ENCODE measurements at regions of chr19 and their contacts with region 1.

Region 1: DNA sequence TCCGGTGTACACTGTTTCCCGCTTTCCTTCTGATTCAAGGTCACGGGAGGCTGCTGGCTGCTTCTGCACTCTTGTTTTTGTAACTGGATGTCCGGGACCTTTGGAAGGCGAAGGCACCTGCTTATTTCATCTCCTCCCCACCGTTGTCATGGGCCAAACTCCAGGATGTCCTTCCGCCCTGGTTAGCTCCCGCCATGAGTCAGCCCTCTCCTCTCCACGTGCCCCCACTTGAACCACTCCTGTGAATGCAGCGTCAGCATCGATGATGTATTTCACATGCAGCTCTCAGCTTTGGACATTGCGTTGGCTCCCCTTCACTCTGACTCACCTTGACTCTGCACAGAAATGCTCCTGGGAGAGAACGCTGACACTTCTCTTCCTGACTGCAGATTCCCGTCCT is 5.5 kb upstream of the GALP start:
- DNase-seq: no peak
- ATAC-seq: no peak
- H3K4me3 Mint-ChIP-seq: no peak overlapping the region
- H3K27ac Mint-ChIP-seq: no peak overlapping the region
- H3K4me1 Mint-ChIP-seq: peaks cover under 1% of the 10 kb centered on the region; the same call in 1 of the 2 replicates
- H3K27me3 Mint-ChIP-seq: peaks cover 5% of the 10 kb centered on the region; the same call in 1 of the 2 replicates
- CTCF ChIP-seq: no peak

Region 2: DNA sequence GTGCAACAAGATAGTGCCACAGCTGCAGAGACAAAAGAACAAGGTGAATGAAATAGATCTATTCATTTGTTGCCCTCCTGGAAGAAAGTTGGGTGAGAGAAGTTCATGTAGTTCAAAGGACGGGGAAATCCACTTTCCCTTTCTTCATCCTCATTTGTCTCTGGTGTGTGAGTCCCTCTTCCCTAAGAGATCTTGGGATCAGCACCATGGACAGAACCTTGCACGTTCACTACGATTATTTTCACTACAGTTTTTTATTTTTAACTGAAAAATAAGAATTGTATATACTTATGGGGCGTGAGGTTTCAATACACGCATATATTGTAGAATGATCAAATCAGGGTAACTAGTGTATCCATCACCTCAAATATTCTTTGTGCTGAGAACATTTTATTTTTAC is 154.5 kb before region 1 on chr19:
- CTCF ChIA-PET with region 1: no interaction called
- POLR2A ChIA-PET with region 1: no interaction called
- DNase-seq: no peak
- ATAC-seq: no peak
- H3K4me3 Mint-ChIP-seq: no peak overlapping the region
- H3K27ac Mint-ChIP-seq: no peak overlapping the region
- H3K4me1 Mint-ChIP-seq: no peaks in the 10 kb centered on the region
- H3K27me3 Mint-ChIP-seq: peaks cover 18% of the 10 kb centered on the region; the same call in 1 of the 2 replicates
- CTCF ChIP-seq: no peak

Region 3: DNA sequence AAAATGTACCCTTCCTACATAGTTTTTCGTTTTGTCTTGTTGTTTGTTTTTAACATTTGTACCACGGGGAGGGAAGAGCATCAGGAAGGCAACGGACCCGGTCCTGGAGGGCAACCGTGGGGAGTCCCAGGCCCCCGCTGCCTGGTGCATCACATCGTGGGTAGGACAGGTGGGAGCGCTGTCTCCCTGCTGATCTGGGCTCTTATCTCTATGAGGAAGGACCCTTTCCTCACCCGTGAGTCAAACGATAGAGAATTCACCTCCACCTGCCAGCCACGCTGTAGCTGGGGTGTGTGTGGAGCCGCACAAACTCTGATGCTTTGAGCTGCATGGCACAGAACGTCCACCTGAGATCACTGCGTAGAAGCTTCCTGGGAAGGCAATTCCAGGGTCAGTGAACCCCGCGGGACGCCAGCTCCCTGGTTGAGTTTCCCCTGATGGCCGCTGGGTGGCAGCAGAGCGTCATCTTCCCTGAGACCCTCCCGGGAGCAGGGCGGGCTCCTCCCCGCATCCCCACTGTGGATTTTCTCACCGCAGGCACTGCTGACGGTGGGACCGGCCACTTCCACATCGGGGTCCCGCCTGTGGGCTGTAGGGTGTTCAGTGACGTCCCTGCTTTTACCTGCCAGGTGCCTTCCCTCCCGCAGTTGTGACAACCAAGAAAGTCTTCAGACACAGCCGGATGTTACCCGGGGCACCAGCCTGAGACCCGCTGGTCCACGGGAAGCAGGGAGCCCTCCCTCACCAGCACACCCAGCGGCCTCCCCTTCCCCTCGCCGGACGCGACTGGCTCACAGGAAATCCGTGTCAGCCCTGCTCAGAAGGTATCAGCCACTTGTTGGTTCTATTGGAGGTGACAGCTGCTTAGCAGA is 103.9 kb before region 1 on chr19:
- CTCF ChIA-PET with region 1: interaction called, 15 read pairs
- POLR2A ChIA-PET with region 1: no interaction called
- DNase-seq: peak; percentile 86
- ATAC-seq: peak; percentile 90
- H3K4me3 Mint-ChIP-seq: peak overlapping the region; percentile 59
- H3K27ac Mint-ChIP-seq: no peak overlapping the region
- H3K4me1 Mint-ChIP-seq: peaks cover 3% of the 10 kb centered on the region; the same call in 1 of the 2 replicates
- H3K27me3 Mint-ChIP-seq: peaks cover 24% of the 10 kb centered on the region
- CTCF ChIP-seq: peak; percentile 90

Region 4: DNA sequence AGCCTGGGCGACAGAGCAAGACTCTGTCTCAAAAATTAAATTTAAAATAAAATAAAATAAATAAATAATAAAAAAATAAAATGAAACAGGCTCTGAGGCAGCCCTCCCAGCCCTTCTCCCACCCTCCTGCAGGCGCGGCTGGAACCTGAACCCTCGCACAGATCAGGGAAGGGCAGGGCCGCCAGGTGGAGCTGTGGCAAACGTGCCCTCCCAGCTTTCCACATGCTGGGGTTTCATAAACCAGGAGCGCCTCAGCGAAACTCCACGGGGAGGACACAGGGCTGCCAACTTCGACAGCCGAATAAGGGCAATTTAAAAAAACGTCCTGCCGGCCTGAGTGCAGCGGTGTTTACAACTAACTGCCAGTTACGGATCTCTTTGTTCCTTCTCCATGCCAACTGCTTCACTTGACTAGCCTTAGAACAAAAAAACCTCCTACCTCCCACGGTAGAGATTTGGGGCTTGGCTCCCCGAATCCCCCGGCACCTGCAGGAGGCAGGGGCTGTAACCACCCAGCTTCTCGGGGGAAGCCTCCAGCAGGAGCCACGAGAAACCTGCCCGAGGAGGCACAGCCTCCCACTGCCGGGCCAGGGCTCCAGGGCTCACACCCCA is 65.1 kb before region 1 on chr19:
- CTCF ChIA-PET with region 1: interaction called, 10 read pairs
- POLR2A ChIA-PET with region 1: no interaction called
- DNase-seq: peak; percentile 87
- ATAC-seq: peak; percentile 86
- H3K4me3 Mint-ChIP-seq: 0 out of 2 replicates have a peak overlapping the region, but pooled peaks have one; percentile 12
- H3K27ac Mint-ChIP-seq: peak overlapping the region; percentile 91
- H3K4me1 Mint-ChIP-seq: peaks cover 42% of the 10 kb centered on the region
- H3K27me3 Mint-ChIP-seq: no peaks in the 10 kb centered on the region
- CTCF ChIP-seq: peak; percentile 60

Region 5: DNA sequence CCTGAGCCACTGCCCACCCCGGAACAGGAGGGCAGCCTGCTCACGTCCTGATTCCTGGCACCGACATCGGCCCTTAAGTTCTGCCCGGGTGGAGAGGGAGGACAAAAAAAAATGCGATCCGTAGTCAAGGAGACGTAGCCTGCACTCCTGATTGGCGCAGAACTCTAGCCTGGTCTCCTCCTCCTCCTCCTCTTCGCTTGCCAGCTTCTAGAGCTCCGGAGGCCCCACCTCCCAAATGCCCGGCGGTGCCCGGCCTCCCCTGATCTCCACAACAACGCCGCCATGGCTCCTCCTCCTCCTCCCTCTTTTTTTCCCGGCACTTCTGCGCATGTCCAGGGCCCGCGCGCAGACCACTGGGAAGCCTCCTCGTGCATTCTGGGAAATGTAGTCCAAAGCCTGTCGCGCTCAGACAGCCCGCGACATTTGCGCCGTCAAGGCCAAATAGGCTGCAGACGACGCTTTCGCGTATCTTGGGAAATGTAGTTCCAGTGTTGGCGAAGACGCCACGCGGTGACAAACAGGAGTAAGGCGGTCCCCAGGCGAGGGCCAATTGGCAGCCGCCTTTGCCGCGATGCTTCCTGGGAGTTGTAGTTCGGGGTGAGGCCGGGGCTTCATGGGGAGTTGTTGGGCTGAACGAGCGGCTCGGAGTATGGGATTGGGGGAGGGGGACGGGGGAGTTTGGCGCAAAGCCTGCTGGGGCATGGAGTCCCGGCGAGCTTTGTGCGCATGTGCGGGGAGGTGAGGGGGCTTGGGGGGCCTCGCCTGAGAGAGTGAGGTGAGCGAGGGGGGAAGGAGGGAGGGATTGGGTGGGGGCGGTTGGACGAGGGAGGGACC is 29.5 kb before region 1 on chr19 and contains the start of gene ZNF444:
- CTCF ChIA-PET with region 1: interaction called, 11 read pairs
- POLR2A ChIA-PET with region 1: interaction called, 3 read pairs
- DNase-seq: peak; percentile 99
- ATAC-seq: peak; percentile 93
- H3K4me3 Mint-ChIP-seq: peak within 1 kb of the TSS; percentile 79
- H3K27ac Mint-ChIP-seq: peak within 1 kb of the TSS; percentile 95
- H3K4me1 Mint-ChIP-seq: peaks cover 37% of the 10 kb centered on the region
- H3K27me3 Mint-ChIP-seq: peaks cover 3% of the 10 kb centered on the region; the same call in 1 of the 2 replicates
- CTCF ChIP-seq: no peak
- total RNA-seq, gene ZNF444: 84.0 to 87.9 TPM (median 87.7 TPM) in 3 replicates